ENCODE measurements at regions of chr12 and their contacts with region 1.

Region 1: GRCh38 chr12:113196996-113197395 is 11.5 kb downstream of the RITA1 start:
- DNase-seq: peak; percentile 78
- ATAC-seq: peak; percentile 60
- H3K4me3 ChIP-seq: no peak overlapping the region
- H3K27ac ChIP-seq: no peak overlapping the region
- H3K4me1 ChIP-seq: peaks cover 9% of the 10 kb centered on the region
- H3K27me3 ChIP-seq: no peaks in the 10 kb centered on the region
- CTCF ChIP-seq: peak; percentile 77
- POLR2A ChIP-seq: no peak; the same call in 1 of the 2 replicates
- RAD21 ChIP-seq: peak; percentile 87

Region 2: GRCh38 chr12:113120670-113121370 is 76.2 kb before region 1 on chr12:
- CTCF ChIA-PET with region 1: no interaction called
- POLR2A ChIA-PET with region 1: no interaction called
- dilution Hi-C with region 1: no loop called
- in situ Hi-C with region 1: no loop called
- intact Hi-C with region 1: no loop called
- DNase-seq: no peak
- ATAC-seq: no peak
- H3K4me3 ChIP-seq: no peak overlapping the region
- H3K27ac ChIP-seq: no peak overlapping the region
- H3K4me1 ChIP-seq: no peaks in the 10 kb centered on the region
- H3K27me3 ChIP-seq: no peaks in the 10 kb centered on the region; the same call in 1 of the 2 replicates
- CTCF ChIP-seq: no peak
- POLR2A ChIP-seq: no peak
- RAD21 ChIP-seq: no peak

Region 3: GRCh38 chr12:113214938-113215400 is 18.0 kb after region 1 on chr12:
- CTCF ChIA-PET with region 1: no interaction called
- POLR2A ChIA-PET with region 1: no interaction called
- dilution Hi-C with region 1: no loop called
- in situ Hi-C with region 1: no loop called
- intact Hi-C with region 1: loop called (anchors 2 kb)
- DNase-seq: peak; percentile 97
- ATAC-seq: peak; percentile 94
- H3K4me3 ChIP-seq: no peak overlapping the region
- H3K27ac ChIP-seq: peak overlapping the region; percentile 55; the same call in 1 of the 2 replicates
- H3K4me1 ChIP-seq: peaks cover 3% of the 10 kb centered on the region; the same call in 1 of the 2 replicates
- H3K27me3 ChIP-seq: no peaks in the 10 kb centered on the region
- CTCF ChIP-seq: no peak
- POLR2A ChIP-seq: no peak
- RAD21 ChIP-seq: peak; percentile 4; the same call in 1 of the 2 replicates

Region 4: GRCh38 chr12:113299619-113300237 is 102.7 kb after region 1 on chr12:
- CTCF ChIA-PET with region 1: no interaction called
- POLR2A ChIA-PET with region 1: no interaction called
- dilution Hi-C with region 1: no loop called
- in situ Hi-C with region 1: no loop called
- intact Hi-C with region 1: loop called (anchors 5 kb)
- DNase-seq: peak; percentile 73
- ATAC-seq: peak; percentile 93
- H3K4me3 ChIP-seq: no peak overlapping the region
- H3K27ac ChIP-seq: peak overlapping the region; percentile 35
- H3K4me1 ChIP-seq: peaks cover 11% of the 10 kb centered on the region
- H3K27me3 ChIP-seq: no peaks in the 10 kb centered on the region
- CTCF ChIP-seq: no peak
- POLR2A ChIP-seq: 0 out of 2 replicates have a peak, but pooled peaks have one; percentile 20
- RAD21 ChIP-seq: no peak; the same call in 1 of the 2 replicates

Region 5: GRCh38 chr12:113310489-113310888 is 113.5 kb after region 1 on chr12:
- CTCF ChIA-PET with region 1: no interaction called
- POLR2A ChIA-PET with region 1: no interaction called
- dilution Hi-C with region 1: no loop called
- in situ Hi-C with region 1: no loop called
- intact Hi-C with region 1: loop called (anchors 1 kb)
- DNase-seq: no peak
- ATAC-seq: no peak
- H3K4me3 ChIP-seq: no peak overlapping the region
- H3K27ac ChIP-seq: no peak overlapping the region
- H3K4me1 ChIP-seq: peaks cover 2% of the 10 kb centered on the region; the same call in 1 of the 2 replicates
- H3K27me3 ChIP-seq: no peaks in the 10 kb centered on the region
- CTCF ChIP-seq: 0 out of 2 replicates have a peak, but pooled peaks have one; percentile 1
- POLR2A ChIP-seq: no peak
- RAD21 ChIP-seq: no peak

Region 6: DNA sequence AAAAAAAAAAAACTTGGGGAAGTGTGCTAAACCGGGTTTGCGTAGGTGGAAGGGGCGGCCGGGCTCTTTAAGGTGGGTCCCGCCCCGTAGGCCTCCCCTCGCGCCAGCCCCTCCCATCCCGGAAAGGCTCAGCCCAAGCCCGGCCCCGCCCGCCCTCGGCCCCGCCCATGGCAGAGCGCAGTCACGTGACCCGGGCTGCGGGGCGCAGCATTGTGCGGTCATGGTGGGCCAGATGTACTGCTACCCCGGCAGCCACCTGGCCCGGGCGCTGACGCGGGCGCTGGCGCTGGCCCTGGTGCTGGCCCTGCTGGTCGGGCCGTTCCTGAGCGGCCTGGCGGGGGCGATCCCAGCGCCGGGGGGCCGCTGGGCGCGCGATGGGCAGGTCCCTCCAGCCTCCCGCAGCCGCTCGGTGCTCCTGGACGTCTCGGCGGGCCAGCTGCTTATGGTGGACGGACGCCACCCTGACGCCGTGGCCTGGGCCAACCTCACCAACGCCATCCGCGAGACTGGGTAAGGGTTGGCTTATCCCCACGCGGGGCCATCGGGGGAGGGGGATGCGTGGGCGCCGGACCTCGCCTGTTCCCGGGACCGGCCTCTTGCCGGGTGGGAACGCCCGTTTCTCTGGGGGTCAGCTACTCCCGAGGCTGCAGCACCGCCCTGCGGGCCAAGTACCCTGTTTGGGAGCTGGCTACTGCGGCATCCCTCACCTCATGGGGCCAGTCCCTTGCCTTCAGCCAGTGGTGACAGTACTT is 161.6 kb after region 1 on chr12 and contains the start of gene PLBD2:
- CTCF ChIA-PET with region 1: interaction called, 3 read pairs
- POLR2A ChIA-PET with region 1: no interaction called
- dilution Hi-C with region 1: no loop called
- in situ Hi-C with region 1: no loop called
- intact Hi-C with region 1: loop called (anchors 10 kb)
- DNase-seq: peak; percentile 89
- ATAC-seq: peak; percentile 98
- H3K4me3 ChIP-seq: peak within 1 kb of the TSS; percentile 80
- H3K27ac ChIP-seq: peak within 1 kb of the TSS; percentile 51
- H3K4me1 ChIP-seq: peaks cover 9% of the 10 kb centered on the region
- H3K27me3 ChIP-seq: no peaks in the 10 kb centered on the region
- CTCF ChIP-seq: no peak
- POLR2A ChIP-seq: peak; percentile 39; the same call in 1 of the 2 replicates
- RAD21 ChIP-seq: peak; percentile 13; the same call in 1 of the 2 replicates
- total RNA-seq, gene PLBD2: 7.3 and 8.1 TPM in 2 replicates

Region 7: DNA sequence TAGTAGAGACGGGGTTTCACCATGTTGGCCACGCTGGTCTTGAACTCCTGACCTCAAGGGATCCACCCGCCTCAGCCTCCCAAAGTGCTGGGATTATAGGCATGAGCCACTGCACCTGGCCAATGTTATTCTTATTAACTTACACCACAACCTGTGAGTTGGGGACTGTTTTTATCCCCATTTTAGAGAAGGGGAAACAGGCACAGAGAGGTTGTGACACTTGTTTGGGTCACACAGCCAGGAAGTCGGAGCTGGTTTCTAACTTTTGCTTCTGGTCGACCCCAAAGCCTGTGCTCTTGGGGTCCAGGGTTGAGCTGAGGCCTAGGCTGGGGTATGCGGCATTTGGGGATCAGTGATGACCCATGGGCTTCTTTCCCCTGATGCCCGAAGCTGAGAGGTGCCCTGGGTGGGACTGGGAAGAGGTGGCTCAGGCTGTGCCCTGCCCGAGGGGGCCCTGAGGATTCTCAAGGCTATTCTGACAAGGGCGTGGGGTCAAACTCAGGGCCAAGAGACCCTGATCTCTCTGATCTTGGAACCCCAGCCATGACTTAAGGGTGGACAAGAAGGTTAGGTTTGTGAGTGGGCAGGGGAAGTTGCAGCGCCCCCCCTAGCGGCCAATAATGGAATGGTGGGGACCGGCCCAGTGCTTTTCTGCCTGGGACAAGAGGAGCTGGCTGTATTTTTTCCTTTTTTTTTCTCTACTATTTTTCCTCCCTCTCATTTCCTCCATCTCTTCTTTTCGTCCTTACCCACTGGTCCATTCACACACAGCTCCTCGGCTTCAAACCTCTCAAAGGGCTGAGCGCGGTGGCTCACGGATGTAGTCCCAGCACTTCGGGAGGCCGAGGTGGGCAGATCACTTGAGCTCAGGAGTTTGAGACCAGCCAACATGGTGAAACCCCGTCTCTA is 228.2 kb after region 1 on chr12:
- CTCF ChIA-PET with region 1: interaction called, 6 read pairs
- POLR2A ChIA-PET with region 1: no interaction called
- dilution Hi-C with region 1: no loop called
- in situ Hi-C with region 1: loop called (anchors 5 kb)
- intact Hi-C with region 1: loop called (anchors 1 kb)
- DNase-seq: peak; percentile 48
- ATAC-seq: peak; percentile 77
- H3K4me3 ChIP-seq: no peak overlapping the region
- H3K27ac ChIP-seq: no peak overlapping the region
- H3K4me1 ChIP-seq: peaks cover 2% of the 10 kb centered on the region; the same call in 1 of the 2 replicates
- H3K27me3 ChIP-seq: no peaks in the 10 kb centered on the region
- CTCF ChIP-seq: peak; percentile 84
- POLR2A ChIP-seq: no peak
- RAD21 ChIP-seq: peak; percentile 72

Region 8: GRCh38 chr12:113912760-113913329 is 715.8 kb after region 1 on chr12:
- CTCF ChIA-PET with region 1: no interaction called
- POLR2A ChIA-PET with region 1: no interaction called
- dilution Hi-C with region 1: no loop called
- in situ Hi-C with region 1: no loop called
- intact Hi-C with region 1: loop called (anchors 5 kb)
- DNase-seq: peak; percentile 70
- ATAC-seq: peak; percentile 94
- H3K4me3 ChIP-seq: no peak overlapping the region
- H3K27ac ChIP-seq: no peak overlapping the region
- H3K4me1 ChIP-seq: no peaks in the 10 kb centered on the region
- H3K27me3 ChIP-seq: no peaks in the 10 kb centered on the region
- CTCF ChIP-seq: peak; percentile 96
- POLR2A ChIP-seq: no peak; the same call in 1 of the 2 replicates
- RAD21 ChIP-seq: peak; percentile 95

Measured in IMR-90 (cell line).